ENCODE measurements at regions of chr1 and their contacts with region 1.

Region 1: DNA sequence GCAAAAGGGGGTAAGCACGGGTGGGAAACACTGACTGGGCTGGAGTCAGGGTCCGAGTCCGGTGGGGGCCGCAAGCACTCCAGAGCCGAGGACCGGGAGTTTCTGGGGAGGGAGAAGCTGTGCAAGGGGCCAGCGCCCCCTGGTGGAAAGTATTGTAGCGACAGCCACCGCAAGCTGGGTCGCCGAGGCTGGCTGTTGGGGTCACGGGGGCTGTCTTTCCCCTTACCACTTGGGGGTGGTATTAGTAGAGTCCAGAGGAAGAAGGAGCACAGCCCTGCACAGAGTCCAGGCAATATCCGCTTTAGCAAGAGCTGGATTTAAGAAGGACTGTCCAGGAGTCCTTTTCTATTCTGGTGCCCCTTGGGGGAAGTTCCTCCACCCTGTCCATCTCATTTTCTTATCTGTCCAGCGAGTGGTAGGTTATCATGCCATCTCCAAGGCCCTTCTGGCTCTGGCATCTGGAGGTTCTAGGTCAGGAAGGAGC is 17.9 kb upstream of the ETV3 start:
- DNase-seq: peak; percentile 56 to 86 (median 76)
- ATAC-seq: peak; percentile 79 to 90
- H3K4me3 Mint-ChIP-seq: peak overlapping the region; percentile 21 to 74 (median 56)
- H3K27ac Mint-ChIP-seq: peak overlapping the region in 5 of 10 donors; percentile 70 to 90 (median 76)
- H3K4me1 Mint-ChIP-seq: peaks cover 10 to 22% (median 20%) of the 10 kb centered on the region in 4 donors
- H3K27me3 Mint-ChIP-seq: peaks cover 5 to 22% (median 19%) of the 10 kb centered on the region in 5 donors

Region 2: DNA sequence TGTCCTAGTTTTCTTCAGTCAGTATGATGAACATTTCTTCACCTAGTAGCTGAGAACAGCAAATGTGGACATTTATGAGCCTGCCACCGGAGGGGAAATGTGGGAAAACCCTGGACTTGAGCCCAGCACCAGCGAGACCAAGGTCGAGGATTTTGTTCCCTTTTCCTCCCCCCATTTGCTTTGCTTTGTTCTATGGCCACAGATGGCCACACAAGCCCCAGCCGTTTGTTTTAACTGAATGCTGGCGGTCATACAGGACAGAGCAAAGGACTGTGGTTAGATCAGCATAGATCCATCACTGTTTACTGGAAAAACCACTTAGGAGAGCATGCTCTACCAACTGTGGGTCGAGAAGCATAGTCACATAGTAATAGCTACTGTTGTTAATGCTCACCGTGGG is 360.3 kb before region 1 on chr1:
- POLR2A ChIA-PET with region 1: no interaction called
- DNase-seq: no peak
- ATAC-seq: no peak
- H3K4me3 Mint-ChIP-seq: no peak overlapping the region
- H3K27ac Mint-ChIP-seq: peak overlapping the region in 2 of 10 donors; percentile 29 to 61
- H3K4me1 Mint-ChIP-seq: peaks cover 0 to 3% (median 2%) of the 10 kb centered on the region in 4 donors
- H3K27me3 Mint-ChIP-seq: no peaks in the 10 kb centered on the region

Region 3: DNA sequence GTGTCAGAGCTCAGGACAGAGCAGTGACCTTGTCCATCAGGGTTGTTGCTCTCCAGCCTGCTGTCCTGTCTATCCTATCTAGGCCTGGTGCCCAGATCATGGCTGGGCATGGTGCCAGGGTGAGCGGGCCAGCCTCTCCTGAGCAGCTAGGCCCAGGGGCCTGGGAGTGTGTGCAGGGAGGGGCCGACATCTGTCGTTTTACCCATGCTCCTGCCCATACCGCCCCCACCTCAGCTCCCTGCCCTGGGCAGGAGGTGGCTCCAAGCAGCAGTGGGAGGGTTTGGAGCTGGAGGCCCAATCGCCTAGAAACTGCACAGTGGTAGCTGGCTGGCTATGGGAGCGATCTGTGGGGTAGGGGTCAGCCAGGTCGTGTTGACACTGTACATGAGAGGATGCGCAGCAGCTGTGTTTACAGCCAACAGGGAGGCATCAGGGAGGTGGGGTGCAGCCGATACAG is 303.7 kb before region 1 on chr1:
- POLR2A ChIA-PET with region 1: no interaction called
- DNase-seq: no peak
- ATAC-seq: no peak
- H3K4me3 Mint-ChIP-seq: no peak overlapping the region
- H3K27ac Mint-ChIP-seq: no peak overlapping the region
- H3K4me1 Mint-ChIP-seq: peaks cover 10 to 18% (median 15%) of the 10 kb centered on the region in 4 donors
- H3K27me3 Mint-ChIP-seq: peaks cover 0 to 16% (median 0%) of the 10 kb centered on the region in 5 donors

Region 4: DNA sequence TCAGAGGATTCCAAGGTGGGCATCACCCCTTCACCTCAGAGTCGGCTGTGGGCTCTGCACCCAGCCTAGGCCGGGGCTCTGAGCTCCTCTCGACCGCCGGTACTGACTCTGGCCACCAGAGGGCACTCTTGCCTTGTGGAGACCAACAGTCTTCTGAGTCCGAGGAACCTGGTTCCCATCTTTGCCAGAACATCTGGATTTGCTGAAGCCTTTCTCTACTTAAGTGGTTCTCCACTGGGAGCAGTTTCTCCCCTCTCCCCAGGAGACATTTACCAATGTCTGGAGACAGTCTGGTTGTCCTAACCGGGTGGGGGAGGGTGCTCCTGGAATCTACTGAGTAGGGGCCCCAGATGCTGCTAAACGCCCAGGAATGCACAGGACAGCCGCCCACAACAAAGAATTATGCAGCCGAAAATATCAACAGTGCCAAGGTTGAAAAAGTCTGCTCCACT is 65.9 kb before region 1 on chr1:
- POLR2A ChIA-PET with region 1: interaction called, 22 read pairs
- DNase-seq: peak; percentile 70 to 92 (median 83)
- ATAC-seq: peak; percentile 84 to 93
- H3K4me3 Mint-ChIP-seq: no peak overlapping the region
- H3K27ac Mint-ChIP-seq: peak overlapping the region in 2 of 10 donors; percentile 71 to 72
- H3K4me1 Mint-ChIP-seq: peaks cover 0 to 3% (median 1%) of the 10 kb centered on the region in 4 donors
- H3K27me3 Mint-ChIP-seq: peaks cover 2 to 8% (median 3%) of the 10 kb centered on the region in 5 donors

Measured in naive thymus-derived CD8-positive, alpha-beta T cell (primary cell).